Activated B cell treated with CpG ODN at 0.5 μM for 24 hours (primary cell): ENCODE measurements at regions of chr7 and their contacts with region 1.

Region 1: DNA sequence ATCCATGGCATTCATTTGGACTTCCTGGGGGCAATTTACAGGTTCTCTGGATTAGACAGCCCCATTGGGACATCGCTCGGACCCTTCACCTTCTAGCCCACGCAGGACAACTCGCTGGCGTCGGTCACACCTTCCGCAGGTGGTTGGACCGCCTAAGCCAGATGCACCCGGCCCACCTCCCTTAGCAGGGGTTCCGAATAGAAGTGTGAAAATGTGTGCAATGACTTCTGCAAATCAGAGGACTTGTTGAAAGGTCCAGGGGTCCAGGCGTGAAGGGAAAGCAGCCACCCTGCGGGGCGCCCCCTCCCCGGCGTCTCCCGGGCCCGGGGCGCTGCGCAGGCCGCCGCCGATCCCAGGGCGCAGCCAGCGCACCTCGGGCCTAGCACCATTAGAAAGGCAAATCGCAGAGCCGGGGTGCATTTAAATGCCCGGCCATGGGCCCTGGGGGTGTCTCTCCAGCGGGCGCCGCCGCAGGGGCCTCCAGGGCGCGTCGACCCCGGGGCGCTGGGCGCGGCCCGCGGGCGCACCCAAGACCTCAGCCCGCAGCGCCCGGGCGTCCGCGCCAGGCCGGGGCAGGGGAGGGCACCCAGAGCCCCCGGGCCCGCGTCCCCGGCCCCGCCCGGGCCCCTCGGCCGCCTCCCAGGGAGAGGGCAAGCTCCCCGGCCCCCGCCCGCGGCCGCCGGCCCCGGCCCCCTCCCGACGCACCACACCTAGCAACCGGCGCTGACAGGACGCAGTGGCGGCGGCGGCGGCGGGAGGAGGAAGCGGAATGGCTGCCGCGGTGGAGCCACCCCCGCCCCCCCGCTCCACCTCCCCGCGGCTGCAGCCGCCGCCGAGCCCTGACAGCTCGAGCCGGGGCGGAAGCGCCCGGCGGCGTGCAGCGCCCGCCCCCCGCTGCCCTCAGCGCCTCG is 1.2 kb downstream of the JAZF1 start:
- DNase-seq: peak; percentile 73
- ATAC-seq: peak; percentile 59
- H3K4me3 Mint-ChIP-seq: peak overlapping the region; percentile 80
- H3K27ac Mint-ChIP-seq: peak overlapping the region; percentile 84
- H3K4me1 Mint-ChIP-seq: peaks cover 77% of the 10 kb centered on the region
- H3K27me3 Mint-ChIP-seq: no peaks in the 10 kb centered on the region
- CTCF ChIP-seq: no peak

Region 2: DNA sequence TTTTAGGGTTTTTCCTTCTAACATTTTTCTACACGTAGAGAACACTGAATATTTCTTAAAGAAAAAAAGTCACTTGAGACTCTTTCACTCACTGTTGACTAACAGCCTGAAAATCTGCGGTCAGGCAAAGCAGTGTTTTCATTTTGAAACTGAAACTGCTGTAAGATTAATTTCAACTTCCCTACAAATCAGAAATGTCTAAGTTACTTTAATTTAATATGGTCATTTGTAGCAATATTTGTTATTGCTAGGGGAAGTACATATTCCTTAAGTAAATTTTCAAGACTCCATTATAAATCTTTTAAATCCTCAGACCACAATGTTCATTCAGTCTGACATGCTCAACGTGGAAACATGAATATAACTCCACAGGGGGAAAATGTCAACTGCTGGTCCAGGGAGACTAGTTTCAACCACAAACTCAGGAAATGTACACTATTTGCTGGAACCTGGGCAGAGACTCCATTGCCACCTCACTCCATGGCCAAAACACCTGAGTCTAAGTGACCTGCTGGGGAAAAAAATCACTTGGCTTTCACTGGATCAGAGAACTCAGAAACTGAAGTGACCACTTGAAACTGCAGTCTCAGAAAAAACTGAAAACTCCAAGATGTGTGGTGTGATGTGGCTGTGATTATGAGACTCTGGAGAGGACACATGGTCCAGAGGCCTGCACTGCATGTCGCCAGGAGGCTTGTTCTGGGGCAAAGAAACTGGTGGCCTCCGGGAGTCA is 278.2 kb before region 1 on chr7:
- CTCF ChIA-PET with region 1: no interaction called
- POLR2A ChIA-PET with region 1: no interaction called
- intact Hi-C with region 1: no loop called
- DNase-seq: no peak
- ATAC-seq: peak; percentile 76
- H3K4me3 Mint-ChIP-seq: peak overlapping the region; percentile 46
- H3K27ac Mint-ChIP-seq: peak overlapping the region; percentile 86
- H3K4me1 Mint-ChIP-seq: peaks cover 70% of the 10 kb centered on the region
- H3K27me3 Mint-ChIP-seq: no peaks in the 10 kb centered on the region
- CTCF ChIP-seq: no peak

Region 3: DNA sequence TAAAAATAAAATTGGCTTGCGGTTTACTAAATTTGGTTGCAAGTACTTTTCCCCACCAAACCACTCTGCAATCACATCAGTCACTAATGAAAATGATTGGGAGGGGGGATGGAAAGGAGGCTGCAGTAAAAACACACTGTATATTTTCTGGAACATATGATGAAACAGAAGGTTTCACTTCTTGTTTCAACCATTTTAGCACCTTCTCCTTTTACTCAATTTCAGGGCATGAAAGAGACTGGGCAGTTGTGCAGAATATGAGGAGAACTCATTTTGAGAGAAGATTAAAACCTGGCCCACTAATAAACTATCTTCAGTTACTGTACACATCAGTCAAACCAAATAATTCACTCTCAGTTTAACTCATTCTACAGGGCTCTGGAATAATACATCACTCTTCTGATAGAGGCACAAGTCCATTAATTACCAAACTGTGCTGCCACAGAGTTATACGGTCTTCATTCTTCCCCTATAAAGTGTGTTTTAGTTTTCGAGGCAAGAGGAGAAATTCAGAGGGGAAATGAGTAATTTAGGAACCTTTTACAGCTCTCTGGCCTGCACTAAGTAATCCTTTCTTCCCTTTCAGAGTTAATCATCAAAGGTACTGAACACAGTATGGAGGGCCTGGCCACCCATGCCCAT is 24.2 kb before region 1 on chr7:
- CTCF ChIA-PET with region 1: interaction called, 4 read pairs
- POLR2A ChIA-PET with region 1: interaction called, 69 read pairs
- intact Hi-C with region 1: loop called (anchors 1 kb)
- DNase-seq: no peak
- ATAC-seq: peak; percentile 68
- H3K4me3 Mint-ChIP-seq: peak overlapping the region; percentile 68
- H3K27ac Mint-ChIP-seq: peak overlapping the region; percentile 94
- H3K4me1 Mint-ChIP-seq: peaks cover 95% of the 10 kb centered on the region
- H3K27me3 Mint-ChIP-seq: no peaks in the 10 kb centered on the region
- CTCF ChIP-seq: no peak

Region 4: DNA sequence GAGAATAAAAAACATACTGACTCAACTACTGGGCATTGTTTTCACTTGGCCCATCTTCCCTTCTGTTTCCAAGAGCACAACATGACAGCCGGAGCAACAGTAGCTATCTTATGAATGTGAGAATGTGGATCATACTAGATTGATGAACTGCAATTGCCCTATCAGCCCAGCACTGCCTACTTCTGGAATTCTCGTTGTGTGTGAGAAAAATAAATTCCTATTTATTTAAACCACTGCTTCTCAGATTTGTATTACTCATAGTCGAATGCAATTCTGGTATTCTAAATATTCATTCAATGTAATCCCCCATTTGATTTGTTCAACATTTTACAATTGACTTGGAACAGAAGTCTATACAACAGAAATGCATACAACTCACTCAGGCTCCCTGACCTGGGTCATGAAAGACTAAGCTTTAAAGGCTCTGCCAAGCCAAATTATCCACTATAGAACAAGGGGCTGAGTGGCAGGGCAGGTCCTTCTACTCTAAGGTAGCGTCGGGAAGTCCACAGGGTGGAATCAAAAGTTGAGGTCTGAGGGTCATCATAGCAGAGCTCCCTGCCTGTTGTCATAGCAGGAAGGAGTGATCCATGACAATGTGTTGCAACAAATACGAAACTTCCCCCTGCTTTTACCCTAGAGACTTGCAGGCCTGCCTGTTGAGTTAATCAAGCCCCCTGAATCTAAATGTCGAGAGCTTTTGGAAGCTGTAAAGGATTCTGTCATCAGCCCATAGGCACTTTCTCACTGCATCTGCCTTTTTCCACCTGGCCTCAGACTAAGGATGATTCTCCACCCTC is 13.6 kb after region 1 on chr7:
- CTCF ChIA-PET with region 1: no interaction called
- POLR2A ChIA-PET with region 1: interaction called, 10 read pairs
- intact Hi-C with region 1: loop called (anchors 2 kb)
- DNase-seq: no peak
- ATAC-seq: peak; percentile 58
- H3K4me3 Mint-ChIP-seq: no peak overlapping the region
- H3K27ac Mint-ChIP-seq: no peak overlapping the region
- H3K4me1 Mint-ChIP-seq: peaks cover 54% of the 10 kb centered on the region
- H3K27me3 Mint-ChIP-seq: no peaks in the 10 kb centered on the region
- CTCF ChIP-seq: no peak

Region 5: DNA sequence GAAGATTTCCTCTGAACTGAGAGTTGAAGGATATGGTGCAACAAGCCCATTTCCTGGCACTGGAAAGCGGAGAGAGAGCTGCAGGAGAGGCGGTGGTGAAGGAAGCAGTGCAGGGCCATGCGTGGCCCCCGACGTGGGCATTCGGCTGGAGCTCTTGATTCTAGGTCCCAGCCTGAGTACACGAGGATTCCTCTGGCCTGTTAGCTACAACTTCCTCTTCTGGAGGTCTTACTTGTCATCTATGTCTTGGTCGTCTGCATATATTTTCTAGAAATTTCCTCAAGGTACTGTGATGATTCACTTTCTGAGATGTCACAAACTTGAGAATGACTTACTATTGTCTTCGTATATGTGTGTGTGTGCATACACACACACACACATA is 60.4 kb after region 1 on chr7:
- CTCF ChIA-PET with region 1: no interaction called
- POLR2A ChIA-PET with region 1: interaction called, 3 read pairs
- intact Hi-C with region 1: loop called (anchors 2 kb)
- DNase-seq: peak; percentile 18
- ATAC-seq: peak; percentile 86
- H3K4me3 Mint-ChIP-seq: peak overlapping the region; percentile 17
- H3K27ac Mint-ChIP-seq: no peak overlapping the region
- H3K4me1 Mint-ChIP-seq: peaks cover 9% of the 10 kb centered on the region
- H3K27me3 Mint-ChIP-seq: no peaks in the 10 kb centered on the region
- CTCF ChIP-seq: no peak